Activated naive CD4-positive, alpha-beta T cell treated with anti-CD3 and anti-CD28 coated beads for 36 hours (primary cell): ENCODE measurements at regions of chr17 and their contacts with region 1.

Region 1: GRCh38 chr17:3012926-3013581 is 50.4 kb downstream of the OR1D5 start:
- DNase-seq: peak; percentile 71
- H3K4me3 Mint-ChIP-seq: no peak overlapping the region
- H3K27ac Mint-ChIP-seq: no peak overlapping the region
- H3K4me1 Mint-ChIP-seq: no peaks in the 10 kb centered on the region
- H3K27me3 Mint-ChIP-seq: no peaks in the 10 kb centered on the region

Region 2: DNA sequence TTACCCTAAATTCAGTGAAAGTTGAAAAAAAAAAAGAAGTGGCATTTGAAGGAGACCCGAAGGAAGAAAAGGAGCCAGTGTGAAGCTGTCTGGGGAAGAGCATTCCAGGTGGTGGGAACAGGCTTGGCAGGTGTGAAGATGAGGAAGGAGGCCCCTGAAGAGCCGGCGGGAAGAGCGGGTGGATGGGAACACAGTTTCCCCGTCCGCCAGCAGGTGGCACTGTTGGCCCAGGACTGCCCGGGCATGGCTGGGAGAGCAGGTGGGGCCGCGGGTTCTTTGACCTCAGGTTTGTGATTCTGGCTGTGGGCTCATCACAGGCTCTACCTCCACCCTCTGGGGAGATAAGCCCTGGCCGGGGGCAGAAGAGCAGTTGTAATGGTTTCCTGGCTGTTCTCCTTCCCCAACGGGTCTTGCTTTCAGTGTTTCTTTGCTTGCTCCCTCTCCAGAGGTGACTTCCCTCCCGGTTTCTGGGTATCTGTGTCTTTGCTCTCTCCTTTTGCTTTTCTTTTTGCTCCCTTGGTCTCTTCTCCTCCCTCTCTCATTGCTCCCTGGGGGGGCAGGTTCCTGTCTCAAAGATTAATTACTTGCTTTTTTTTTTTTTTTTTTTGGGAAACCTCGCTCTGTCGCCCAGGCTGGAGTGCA is 184.5 kb before region 1 on chr17:
- CTCF ChIA-PET with region 1: interaction called, 19 read pairs
- intact Hi-C with region 1: loop called (anchors 2 kb)
- DNase-seq: peak; percentile 88
- H3K4me3 Mint-ChIP-seq: no peak overlapping the region
- H3K27ac Mint-ChIP-seq: no peak overlapping the region
- H3K4me1 Mint-ChIP-seq: peaks cover 11% of the 10 kb centered on the region
- H3K27me3 Mint-ChIP-seq: peaks cover 5% of the 10 kb centered on the region

Region 3: DNA sequence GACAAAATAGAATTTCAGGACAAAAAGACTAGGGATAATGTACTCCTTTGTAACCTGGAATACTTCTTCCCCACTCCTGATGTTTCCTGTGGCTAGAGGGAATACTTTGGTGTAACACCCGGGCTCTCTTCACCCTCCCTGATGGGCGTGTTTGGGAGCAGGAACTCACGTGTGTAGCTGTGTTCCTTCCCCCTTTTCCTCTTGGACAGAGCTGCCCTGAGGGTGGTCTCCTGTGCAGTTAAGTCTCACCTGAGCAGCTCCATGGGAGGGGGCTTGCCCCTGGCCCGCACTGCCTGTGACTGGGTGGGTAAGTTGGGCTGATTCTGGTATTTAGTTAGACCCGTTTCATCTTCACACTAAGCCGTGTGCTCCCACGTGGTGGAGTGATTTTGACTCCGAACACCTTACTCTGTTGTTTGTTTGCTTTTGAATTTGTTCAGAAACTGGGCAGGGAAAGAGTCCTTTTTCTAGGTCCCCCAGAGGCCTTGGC is 37.5 kb before region 1 on chr17:
- CTCF ChIA-PET with region 1: no interaction called
- intact Hi-C with region 1: no loop called
- DNase-seq: no peak
- H3K4me3 Mint-ChIP-seq: no peak overlapping the region
- H3K27ac Mint-ChIP-seq: no peak overlapping the region
- H3K4me1 Mint-ChIP-seq: no peaks in the 10 kb centered on the region
- H3K27me3 Mint-ChIP-seq: no peaks in the 10 kb centered on the region